AG04449 (cell line): ENCODE measurements at regions of chr7 and their contacts with region 1.

Region 1: GRCh38 chr7:107743567-107744344 is at the start of gene CBLL1:
- DNase-seq: peak; percentile 63
- H3K4me3 ChIP-seq: peak within 1 kb of the TSS; percentile 98
- CTCF ChIP-seq: peak; percentile 89

Region 2: GRCh38 chr7:107638594-107638993 is 105.2 kb before region 1 on chr7:
- CTCF ChIA-PET with region 1: no interaction called
- POLR2A ChIA-PET with region 1: no interaction called
- DNase-seq: no peak
- H3K4me3 ChIP-seq: no peak overlapping the region
- CTCF ChIP-seq: no peak

Region 3: GRCh38 chr7:107725151-107725740 is 18.5 kb before region 1 on chr7:
- CTCF ChIA-PET with region 1: interaction called, 39 read pairs
- POLR2A ChIA-PET with region 1: no interaction called
- DNase-seq: peak; percentile 12
- H3K4me3 ChIP-seq: no peak overlapping the region
- CTCF ChIP-seq: peak; percentile 41